ENCODE measurements at regions of chr1 and their contacts with region 1.

Region 1: GRCh38 chr1:29181413-29182225 is at the start of gene SRSF4:
- DNase-seq: peak; percentile 98
- ATAC-seq: peak; percentile 95
- H3K4me3 Mint-ChIP-seq: peak within 1 kb of the TSS; percentile 83
- H3K27ac Mint-ChIP-seq: peak within 1 kb of the TSS; percentile 98
- H3K4me1 Mint-ChIP-seq: peaks cover 42% of the 10 kb centered on the region
- H3K27me3 Mint-ChIP-seq: no peaks in the 10 kb centered on the region
- CTCF ChIP-seq: peak; percentile 53
- total RNA-seq, gene SRSF4: 121 to 123 TPM

Region 2: GRCh38 chr1:28648474-28649198 is 533.0 kb before region 1 on chr1 and contains the start of gene RNU11:
- CTCF ChIA-PET with region 1: no interaction called
- POLR2A ChIA-PET with region 1: interaction called, 5 read pairs
- intact Hi-C with region 1: loop called (anchors 5 kb)
- DNase-seq: peak; percentile 93
- ATAC-seq: peak; percentile 80
- H3K4me3 Mint-ChIP-seq: peak within 1 kb of the TSS; percentile 91
- H3K27ac Mint-ChIP-seq: peak within 1 kb of the TSS; percentile 100
- H3K4me1 Mint-ChIP-seq: peaks cover 30% of the 10 kb centered on the region
- H3K27me3 Mint-ChIP-seq: no peaks in the 10 kb centered on the region
- CTCF ChIP-seq: no peak
- total RNA-seq, gene RNU11: not detected

Region 3: DNA sequence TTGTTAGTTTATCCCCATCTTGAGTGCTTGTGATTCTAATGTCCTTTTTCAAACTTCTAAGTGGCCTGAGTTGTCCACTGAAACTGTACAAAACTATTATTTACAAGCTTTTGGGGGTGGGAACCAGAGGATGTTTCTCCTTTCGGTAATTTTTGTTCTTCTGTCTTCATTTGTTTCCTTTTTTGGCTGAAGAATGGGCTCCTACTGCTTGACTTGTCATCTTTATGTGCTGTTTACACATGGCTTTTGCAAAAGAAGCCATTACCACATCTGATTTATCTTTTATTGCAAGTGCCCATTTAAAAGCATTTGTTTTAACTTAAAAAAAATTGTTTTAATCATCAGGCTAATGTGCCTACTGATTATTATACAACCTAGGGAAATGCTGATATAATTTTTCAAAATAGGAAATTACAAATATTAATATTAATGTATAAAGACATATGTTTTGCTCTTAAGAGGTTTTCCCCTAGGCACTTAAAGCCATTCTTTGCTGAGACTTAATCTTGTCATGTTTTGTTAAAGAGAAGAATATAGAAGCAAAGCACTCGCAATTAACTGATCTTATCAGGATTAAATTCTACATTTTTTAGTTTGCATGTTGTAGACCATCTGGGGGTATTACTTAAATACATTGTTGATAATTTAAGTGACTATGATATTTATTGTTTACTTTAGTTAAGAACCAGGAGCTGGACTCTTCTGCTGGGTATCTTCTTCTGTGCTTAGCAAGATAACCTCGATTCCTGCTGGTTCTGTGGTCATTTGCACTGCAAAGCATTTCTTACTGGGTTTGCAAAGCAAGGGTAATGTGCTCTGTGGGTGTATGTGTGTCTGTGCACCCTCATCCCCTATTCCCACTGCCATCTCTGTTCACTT is 98.1 kb before region 1 on chr1:
- CTCF ChIA-PET with region 1: no interaction called
- POLR2A ChIA-PET with region 1: no interaction called
- intact Hi-C with region 1: no loop called
- DNase-seq: no peak
- ATAC-seq: no peak
- H3K4me3 Mint-ChIP-seq: no peak overlapping the region
- H3K27ac Mint-ChIP-seq: no peak overlapping the region
- H3K4me1 Mint-ChIP-seq: peaks cover 13% of the 10 kb centered on the region
- H3K27me3 Mint-ChIP-seq: no peaks in the 10 kb centered on the region
- CTCF ChIP-seq: no peak

Region 4: DNA sequence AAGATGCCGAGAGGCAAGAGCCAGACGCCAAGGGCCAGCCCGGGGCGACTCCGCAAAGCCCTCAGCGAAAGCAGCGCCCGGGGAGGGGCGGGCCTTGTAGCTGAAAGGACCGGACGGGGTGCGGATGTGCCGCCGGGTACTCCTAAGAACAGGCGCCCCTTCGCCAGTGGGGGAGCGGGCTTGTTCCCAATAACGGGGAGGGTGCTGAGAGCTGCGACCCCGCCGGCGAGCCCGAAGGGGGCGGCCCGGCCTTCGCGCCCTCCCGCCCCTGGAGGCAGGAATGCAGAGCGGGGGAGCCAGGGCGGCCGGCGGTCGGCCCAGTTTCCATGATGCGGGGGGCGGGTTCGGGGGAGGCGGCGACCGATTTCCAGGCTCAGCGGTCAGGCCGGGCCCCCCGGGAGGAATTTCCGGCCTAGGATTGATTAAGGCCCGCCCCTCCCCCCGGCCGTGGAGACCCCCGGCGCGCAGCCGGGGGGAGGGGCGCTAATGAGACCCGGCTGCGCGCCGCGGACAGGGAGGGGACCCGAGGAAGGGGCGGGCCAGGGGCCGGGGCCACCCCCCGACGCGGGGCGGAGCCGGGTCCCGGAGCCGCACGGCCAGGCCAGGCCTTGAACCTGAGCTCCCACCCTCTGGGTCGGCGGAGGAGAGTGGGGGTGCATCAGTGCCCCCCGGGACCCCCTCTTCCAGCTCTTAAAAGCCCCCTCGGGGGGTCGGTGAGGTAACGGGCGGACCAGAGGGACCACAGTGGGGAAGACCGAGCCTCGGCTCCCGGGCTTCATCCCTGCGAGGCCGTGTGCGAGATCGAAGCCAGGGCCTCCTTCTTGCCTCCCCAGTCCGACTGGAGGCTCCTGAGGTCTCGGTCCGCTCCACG is 57.0 kb before region 1 on chr1:
- CTCF ChIA-PET with region 1: interaction called, 3 read pairs
- POLR2A ChIA-PET with region 1: interaction called, 10 read pairs
- intact Hi-C with region 1: no loop called
- DNase-seq: peak; percentile 86
- ATAC-seq: peak; percentile 68
- H3K4me3 Mint-ChIP-seq: peak overlapping the region; percentile 73
- H3K27ac Mint-ChIP-seq: no peak overlapping the region
- H3K4me1 Mint-ChIP-seq: no peaks in the 10 kb centered on the region
- H3K27me3 Mint-ChIP-seq: peaks cover 21% of the 10 kb centered on the region
- CTCF ChIP-seq: no peak

Region 5: GRCh38 chr1:29171089-29171488 is 10.5 kb before region 1 on chr1:
- CTCF ChIA-PET with region 1: interaction called, 5 read pairs
- POLR2A ChIA-PET with region 1: interaction called, 23 read pairs
- intact Hi-C with region 1: no loop called
- DNase-seq: no peak
- ATAC-seq: no peak
- H3K4me3 Mint-ChIP-seq: no peak overlapping the region
- H3K27ac Mint-ChIP-seq: peak overlapping the region; percentile 76
- H3K4me1 Mint-ChIP-seq: peaks cover 56% of the 10 kb centered on the region
- H3K27me3 Mint-ChIP-seq: no peaks in the 10 kb centered on the region
- CTCF ChIP-seq: no peak

Region 6: DNA sequence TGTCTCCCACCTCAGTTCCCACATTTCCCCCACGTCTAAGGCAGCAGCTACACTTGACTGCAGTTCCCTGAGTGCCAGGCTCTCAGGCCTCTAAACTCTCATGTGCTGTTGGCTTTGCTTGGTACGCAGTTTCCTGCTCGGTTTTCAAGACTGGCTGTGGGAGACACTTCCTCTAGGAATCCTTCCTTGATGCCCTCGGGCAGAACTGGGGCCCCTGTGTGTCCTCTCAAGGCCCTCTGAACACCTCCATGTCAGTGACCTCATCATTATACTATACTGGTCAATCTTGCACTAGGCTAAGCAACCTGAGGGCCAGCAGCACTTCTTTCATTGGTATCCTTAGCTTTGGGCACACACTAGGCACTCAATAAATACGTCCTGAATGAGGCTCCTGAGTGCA is 10.6 kb after region 1 on chr1:
- CTCF ChIA-PET with region 1: interaction called, 4 read pairs
- POLR2A ChIA-PET with region 1: interaction called, 18 read pairs
- intact Hi-C with region 1: no loop called
- DNase-seq: no peak
- ATAC-seq: no peak
- H3K4me3 Mint-ChIP-seq: no peak overlapping the region
- H3K27ac Mint-ChIP-seq: no peak overlapping the region
- H3K4me1 Mint-ChIP-seq: no peaks in the 10 kb centered on the region
- H3K27me3 Mint-ChIP-seq: no peaks in the 10 kb centered on the region
- CTCF ChIP-seq: no peak

Region 7: DNA sequence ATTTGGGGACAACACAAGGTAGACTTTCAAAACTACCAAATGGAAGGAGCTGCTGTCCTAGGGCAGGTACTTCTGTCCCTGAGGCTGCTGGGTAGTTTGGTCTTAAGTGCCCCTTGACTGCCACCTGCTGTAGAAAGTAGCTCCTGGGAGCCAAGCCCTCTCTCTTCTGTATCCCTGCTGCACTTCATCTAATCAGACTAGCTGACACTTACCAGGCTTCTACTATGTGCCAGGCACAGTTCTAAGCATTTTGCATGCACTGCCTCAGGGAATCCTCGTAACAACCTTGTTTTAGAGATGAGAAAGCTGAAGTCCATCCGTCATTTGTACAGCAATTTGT is 15.9 kb after region 1 on chr1:
- CTCF ChIA-PET with region 1: interaction called, 63 read pairs
- POLR2A ChIA-PET with region 1: interaction called, 18 read pairs
- intact Hi-C with region 1: no loop called
- DNase-seq: peak; percentile 61
- ATAC-seq: peak; percentile 94
- H3K4me3 Mint-ChIP-seq: no peak overlapping the region
- H3K27ac Mint-ChIP-seq: no peak overlapping the region
- H3K4me1 Mint-ChIP-seq: peaks cover 12% of the 10 kb centered on the region
- H3K27me3 Mint-ChIP-seq: no peaks in the 10 kb centered on the region
- CTCF ChIP-seq: peak; percentile 38

Region 8: DNA sequence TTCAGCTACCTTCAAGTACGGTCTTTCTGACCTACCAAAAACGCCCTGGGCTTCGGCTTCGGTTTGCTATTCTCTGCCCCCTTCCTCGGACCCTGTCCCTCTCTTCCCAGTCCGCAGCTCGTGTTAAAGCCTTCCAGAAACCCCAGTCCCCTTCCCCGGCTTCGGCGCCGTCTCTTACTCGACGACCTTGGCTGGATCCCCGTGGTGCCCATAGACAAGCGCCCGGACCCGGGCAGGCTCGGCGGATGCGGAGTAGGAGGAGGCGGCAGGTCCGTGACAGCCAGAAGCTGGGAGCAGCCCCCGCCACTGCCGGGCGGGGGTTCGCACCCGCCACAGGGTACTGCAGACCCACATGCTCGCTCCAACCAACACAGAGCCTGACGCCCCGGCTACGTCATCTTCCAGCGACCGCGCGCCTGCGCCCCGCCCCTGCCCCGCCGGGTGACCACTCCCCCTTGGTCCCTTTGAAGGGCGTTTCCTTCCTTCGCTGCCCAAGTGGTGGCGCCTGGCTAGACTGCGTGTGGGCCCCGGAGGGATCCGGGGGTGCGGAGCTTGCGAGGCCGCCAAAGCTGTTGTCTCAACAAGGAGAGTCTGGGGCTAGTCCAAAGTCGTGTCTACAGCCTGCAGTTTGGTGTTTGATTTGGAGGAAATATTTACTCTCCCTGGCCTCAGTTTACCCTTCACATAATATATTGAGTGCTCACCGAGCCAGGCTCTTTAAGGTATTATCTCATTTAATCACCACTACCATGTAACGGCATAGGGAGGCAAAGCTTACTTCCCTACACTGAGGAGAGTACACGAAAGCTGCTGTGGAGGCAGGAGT is 49.1 kb after region 1 on chr1 and contains the start of gene MECR:
- CTCF ChIA-PET with region 1: interaction called, 4 read pairs
- POLR2A ChIA-PET with region 1: interaction called, 11 read pairs
- intact Hi-C with region 1: no loop called
- DNase-seq: peak; percentile 96
- ATAC-seq: peak; percentile 98
- H3K4me3 Mint-ChIP-seq: peak within 1 kb of the TSS; percentile 97
- H3K27ac Mint-ChIP-seq: peak within 1 kb of the TSS; percentile 89
- H3K4me1 Mint-ChIP-seq: peaks cover 21% of the 10 kb centered on the region
- H3K27me3 Mint-ChIP-seq: peaks cover 3% of the 10 kb centered on the region
- CTCF ChIP-seq: no peak
- total RNA-seq, gene MECR: 42.2 to 43.5 TPM

Region 9: GRCh38 chr1:29410476-29410875 is 228.9 kb after region 1 on chr1:
- CTCF ChIA-PET with region 1: no interaction called
- POLR2A ChIA-PET with region 1: no interaction called
- intact Hi-C with region 1: no loop called
- DNase-seq: no peak
- ATAC-seq: no peak
- H3K4me3 Mint-ChIP-seq: no peak overlapping the region
- H3K27ac Mint-ChIP-seq: no peak overlapping the region
- H3K4me1 Mint-ChIP-seq: no peaks in the 10 kb centered on the region
- H3K27me3 Mint-ChIP-seq: peaks cover 9% of the 10 kb centered on the region
- CTCF ChIP-seq: no peak

Measured in activated CD8-positive, alpha-beta T cell treated with anti-CD3 and anti-CD28 coated beads for 36 hours (primary cell).